CD4-positive, alpha-beta memory T cell (primary cell): ENCODE measurements at regions of chr1 and their contacts with region 1.

Region 1: GRCh38 chr1:22025368-22026155 is 24.1 kb downstream of the CELA3A start:
- DNase-seq: peak; percentile 89 to 97 (median 92)
- H3K4me3 ChIP-seq: peak overlapping the region; percentile 95 to 99
- H3K4me3 Mint-ChIP-seq: peak overlapping the region; percentile 89 to 98 (median 94)
- H3K27ac ChIP-seq: peak overlapping the region; percentile 97
- H3K27ac Mint-ChIP-seq: peak overlapping the region; percentile 91 to 100 (median 99)
- H3K4me1 ChIP-seq: peaks cover 46% of the 10 kb centered on the region
- H3K4me1 Mint-ChIP-seq: peaks cover 31 to 62% (median 47%) of the 10 kb centered on the region in 4 donors
- H3K27me3 ChIP-seq: no peaks in the 10 kb centered on the region
- H3K27me3 Mint-ChIP-seq: no peaks in the 10 kb centered on the region

Region 2: GRCh38 chr1:21294266-21294989 is 731.1 kb before region 1 on chr1:
- CTCF ChIA-PET with region 1: no interaction called
- POLR2A ChIA-PET with region 1: interaction called, 11 read pairs
- intact Hi-C with region 1: no loop called
- DNase-seq: peak; percentile 93 to 99 (median 97)
- H3K4me3 ChIP-seq: peak overlapping the region; percentile 79 to 81
- H3K4me3 Mint-ChIP-seq: peak overlapping the region; percentile 86 to 99 (median 94)
- H3K27ac ChIP-seq: peak overlapping the region; percentile 99
- H3K27ac Mint-ChIP-seq: peak overlapping the region; percentile 96 to 100 (median 99)
- H3K4me1 ChIP-seq: peaks cover 84% of the 10 kb centered on the region
- H3K4me1 Mint-ChIP-seq: peaks cover 42 to 95% (median 69%) of the 10 kb centered on the region in 4 donors
- H3K27me3 ChIP-seq: no peaks in the 10 kb centered on the region
- H3K27me3 Mint-ChIP-seq: no peaks in the 10 kb centered on the region

Region 3: GRCh38 chr1:21725748-21726392 is 299.7 kb before region 1 on chr1:
- CTCF ChIA-PET with region 1: no interaction called
- POLR2A ChIA-PET with region 1: no interaction called
- intact Hi-C with region 1: no loop called
- DNase-seq: no peak
- H3K4me3 ChIP-seq: no peak overlapping the region
- H3K4me3 Mint-ChIP-seq: no peak overlapping the region
- H3K27ac ChIP-seq: no peak overlapping the region
- H3K27ac Mint-ChIP-seq: no peak overlapping the region
- H3K4me1 ChIP-seq: no peaks in the 10 kb centered on the region
- H3K4me1 Mint-ChIP-seq: peaks cover 0 to 2% (median 0%) of the 10 kb centered on the region in 4 donors
- H3K27me3 ChIP-seq: no peaks in the 10 kb centered on the region
- H3K27me3 Mint-ChIP-seq: no peaks in the 10 kb centered on the region

Region 4: GRCh38 chr1:21919520-21919919 is 106.0 kb before region 1 on chr1:
- CTCF ChIA-PET with region 1: no interaction called
- POLR2A ChIA-PET with region 1: no interaction called
- intact Hi-C with region 1: no loop called
- DNase-seq: no peak
- H3K4me3 ChIP-seq: no peak overlapping the region
- H3K4me3 Mint-ChIP-seq: no peak overlapping the region
- H3K27ac ChIP-seq: no peak overlapping the region
- H3K27ac Mint-ChIP-seq: no peak overlapping the region
- H3K4me1 ChIP-seq: no peaks in the 10 kb centered on the region
- H3K4me1 Mint-ChIP-seq: no peaks in the 10 kb centered on the region
- H3K27me3 ChIP-seq: no peaks in the 10 kb centered on the region
- H3K27me3 Mint-ChIP-seq: peaks cover 0 to 2% of the 10 kb centered on the region in 2 donors

Region 5: GRCh38 chr1:22039594-22040285 is 14.2 kb after region 1 on chr1:
- CTCF ChIA-PET with region 1: interaction called, 113 read pairs
- POLR2A ChIA-PET with region 1: interaction called, 339 read pairs
- intact Hi-C with region 1: loop called (anchors 1 kb)
- DNase-seq: peak; percentile 93 to 99 (median 98)
- H3K4me3 ChIP-seq: peak overlapping the region; percentile 24 to 53
- H3K4me3 Mint-ChIP-seq: peak overlapping the region; percentile 78 to 89 (median 84)
- H3K27ac ChIP-seq: peak overlapping the region; percentile 86
- H3K27ac Mint-ChIP-seq: peak overlapping the region; percentile 94 to 100 (median 99)
- H3K4me1 ChIP-seq: peaks cover 75% of the 10 kb centered on the region
- H3K4me1 Mint-ChIP-seq: peaks cover 40 to 76% (median 54%) of the 10 kb centered on the region in 4 donors
- H3K27me3 ChIP-seq: no peaks in the 10 kb centered on the region
- H3K27me3 Mint-ChIP-seq: no peaks in the 10 kb centered on the region

Region 6: DNA sequence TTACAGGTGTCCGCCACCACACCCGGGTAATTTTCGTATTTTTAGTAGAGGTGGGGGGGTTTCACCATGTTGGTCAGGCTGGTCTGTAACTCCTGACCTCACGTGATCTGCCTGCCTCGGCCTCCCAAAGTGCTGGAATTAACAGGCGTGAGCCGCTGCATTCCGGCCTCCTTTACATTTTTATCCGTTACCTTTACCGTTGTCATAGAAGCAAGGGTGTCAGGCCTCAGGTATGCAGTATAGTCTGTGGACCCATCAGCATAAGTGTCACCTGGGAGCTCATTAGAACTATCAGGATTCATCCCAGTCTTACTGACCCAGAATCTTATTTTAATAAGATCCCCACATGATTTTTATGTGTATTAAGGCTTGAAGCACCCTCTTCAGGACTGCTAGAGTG is 32.3 kb after region 1 on chr1:
- CTCF ChIA-PET with region 1: interaction called, 57 read pairs
- POLR2A ChIA-PET with region 1: interaction called, 874 read pairs
- intact Hi-C with region 1: no loop called
- DNase-seq: no peak
- H3K4me3 ChIP-seq: no peak overlapping the region
- H3K4me3 Mint-ChIP-seq: peak overlapping the region; percentile 21 to 85 (median 56)
- H3K27ac ChIP-seq: peak overlapping the region; percentile 8
- H3K27ac Mint-ChIP-seq: peak overlapping the region; percentile 42 to 89 (median 70)
- H3K4me1 ChIP-seq: peaks cover 88% of the 10 kb centered on the region
- H3K4me1 Mint-ChIP-seq: peaks cover 47 to 90% (median 67%) of the 10 kb centered on the region in 4 donors
- H3K27me3 ChIP-seq: no peaks in the 10 kb centered on the region
- H3K27me3 Mint-ChIP-seq: no peaks in the 10 kb centered on the region

Region 7: GRCh38 chr1:22077728-22078127 is 52.2 kb after region 1 on chr1:
- CTCF ChIA-PET with region 1: interaction called, 11 read pairs
- POLR2A ChIA-PET with region 1: interaction called, 38 read pairs
- intact Hi-C with region 1: no loop called
- DNase-seq: no peak
- H3K4me3 ChIP-seq: no peak overlapping the region
- H3K4me3 Mint-ChIP-seq: peak overlapping the region in 5 of 8 donors; percentile 36 to 76 (median 49)
- H3K27ac ChIP-seq: no peak overlapping the region
- H3K27ac Mint-ChIP-seq: peak overlapping the region in 5 of 7 donors; percentile 4 to 82 (median 57)
- H3K4me1 ChIP-seq: peaks cover 92% of the 10 kb centered on the region
- H3K4me1 Mint-ChIP-seq: peaks cover 63 to 96% (median 77%) of the 10 kb centered on the region in 4 donors
- H3K27me3 ChIP-seq: no peaks in the 10 kb centered on the region
- H3K27me3 Mint-ChIP-seq: no peaks in the 10 kb centered on the region

Region 8: DNA sequence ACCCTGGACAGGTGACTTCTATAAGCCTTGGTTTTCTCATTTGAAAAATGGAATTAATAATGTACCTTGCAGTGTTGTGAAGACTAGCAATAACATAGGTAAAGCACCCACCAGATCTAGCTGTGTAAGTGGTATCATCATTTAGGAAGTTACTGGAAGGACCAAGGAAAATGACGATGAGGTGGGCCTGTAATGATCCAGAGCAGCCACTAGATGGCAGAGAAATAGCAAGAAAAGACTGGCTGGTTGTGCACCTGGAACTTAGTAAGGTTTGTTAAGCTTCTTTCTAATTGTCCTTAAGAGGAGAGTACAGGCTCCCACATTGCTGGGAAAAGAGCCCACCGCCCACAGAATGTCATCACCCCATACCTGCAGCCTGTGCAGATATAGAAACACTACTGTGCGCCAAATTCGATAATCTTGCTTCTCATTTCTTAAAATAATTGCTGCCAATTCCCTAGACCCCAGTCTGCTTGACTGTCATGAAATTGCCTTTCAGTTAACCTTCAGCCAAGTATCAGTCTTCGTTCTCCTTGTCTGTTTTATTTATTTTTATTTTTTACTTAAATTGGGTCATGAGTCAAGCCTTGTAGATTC is 80.1 kb after region 1 on chr1:
- CTCF ChIA-PET with region 1: interaction called, 16 read pairs
- POLR2A ChIA-PET with region 1: interaction called, 22 read pairs
- intact Hi-C with region 1: loop called (anchors 2 kb)
- DNase-seq: peak; percentile 46 to 62 (median 50)
- H3K4me3 ChIP-seq: no peak overlapping the region
- H3K4me3 Mint-ChIP-seq: peak overlapping the region in 7 of 8 donors; percentile 19 to 86 (median 43)
- H3K27ac ChIP-seq: peak overlapping the region; percentile 30
- H3K27ac Mint-ChIP-seq: peak overlapping the region; percentile 70 to 92 (median 80)
- H3K4me1 ChIP-seq: peaks cover 57% of the 10 kb centered on the region
- H3K4me1 Mint-ChIP-seq: peaks cover 46 to 78% (median 60%) of the 10 kb centered on the region in 4 donors
- H3K27me3 ChIP-seq: no peaks in the 10 kb centered on the region
- H3K27me3 Mint-ChIP-seq: no peaks in the 10 kb centered on the region